ENCODE measurements at regions of chr6 and their contacts with region 1.

Region 1: DNA sequence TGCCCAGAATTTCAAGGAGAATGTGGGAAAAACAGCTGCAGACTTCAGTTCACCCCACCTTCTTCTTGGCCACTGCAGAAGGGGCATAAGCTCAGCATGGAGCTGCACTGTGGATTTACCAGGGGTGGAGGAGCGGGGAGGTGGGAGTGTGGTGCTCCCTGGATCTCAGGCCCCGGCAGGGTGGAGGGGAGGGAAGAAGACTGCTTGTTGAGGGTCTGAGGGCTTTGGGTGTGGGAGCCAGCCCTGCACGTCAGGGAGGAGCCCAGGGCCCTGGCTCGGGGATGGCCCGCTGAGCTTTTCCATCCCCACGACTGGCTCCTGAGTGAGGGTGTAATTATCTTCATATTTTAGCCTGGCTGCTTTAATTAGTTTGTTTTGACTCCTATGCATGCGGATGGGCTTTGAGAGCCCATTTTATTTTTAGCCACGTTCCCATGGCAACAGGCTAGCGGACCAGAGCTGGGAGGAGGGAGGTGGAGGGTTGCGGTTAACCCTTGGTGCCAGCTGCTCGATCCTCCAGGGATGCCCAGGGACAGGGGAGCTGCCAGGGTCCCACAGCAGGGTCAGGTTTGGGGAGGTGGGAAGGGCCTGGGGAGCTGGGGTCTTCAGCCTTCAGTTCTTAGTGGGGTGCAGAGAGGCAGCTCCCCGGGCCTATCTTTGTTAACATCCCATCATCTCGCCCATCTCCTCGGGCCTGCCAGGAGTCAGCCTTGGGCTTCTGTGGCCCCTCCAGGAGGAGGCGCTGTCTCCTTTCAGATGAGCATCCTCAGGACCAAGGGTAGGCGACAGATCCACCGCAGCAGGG is 68.2 kb downstream of the RAB44 start:
- DNase-seq: peak; percentile 87
- H3K4me3 ChIP-seq: no peak overlapping the region
- H3K27ac ChIP-seq: no peak overlapping the region
- H3K4me1 ChIP-seq: peaks cover 12% of the 10 kb centered on the region
- H3K27me3 ChIP-seq: no peaks in the 10 kb centered on the region
- CTCF ChIP-seq: peak; percentile 75 to 92 (median 80)
- POLR2A ChIP-seq: no peak

Region 2: DNA sequence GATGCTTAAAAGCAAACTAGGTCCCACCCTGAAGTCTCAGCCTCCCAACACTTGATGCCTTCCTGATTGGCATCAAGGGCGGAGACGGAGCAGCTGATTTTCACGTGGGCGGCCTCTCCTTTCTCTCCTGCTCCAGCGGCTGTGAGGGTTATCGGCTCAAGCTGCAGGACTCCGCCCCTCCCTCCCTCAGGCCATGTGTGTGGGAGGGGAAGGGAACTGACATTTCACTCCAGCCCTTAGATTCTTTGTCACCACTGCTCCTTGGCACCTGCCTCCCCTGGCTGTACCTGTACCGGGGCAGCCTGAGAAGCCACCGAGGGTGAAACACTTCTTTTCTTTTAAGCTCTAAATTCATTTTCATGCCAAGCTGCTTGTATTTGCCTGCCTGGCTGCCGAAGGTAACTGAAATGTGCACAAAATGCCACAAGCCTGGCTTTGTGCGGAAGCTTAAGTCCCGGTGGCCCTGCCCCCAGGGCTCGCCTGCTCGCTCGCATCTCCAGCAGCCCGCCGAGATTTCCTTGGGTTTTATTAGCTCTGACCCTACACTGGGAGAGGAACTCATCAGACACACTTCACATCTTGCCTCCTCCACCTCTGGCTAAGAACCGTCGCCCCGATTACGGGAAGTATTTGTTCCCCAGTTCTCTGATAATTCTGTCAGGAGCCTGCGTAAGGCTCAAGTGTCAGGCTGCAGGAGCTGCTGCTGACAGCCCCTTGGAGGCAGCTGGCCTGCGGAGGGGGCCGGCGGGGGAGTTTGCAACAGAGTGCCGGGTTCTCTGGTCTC is 83.1 kb after region 1 on chr6:
- intact Hi-C with region 1: loop called (anchors 5 kb)
- DNase-seq: peak; percentile 94
- H3K4me3 ChIP-seq: no peak overlapping the region
- H3K27ac ChIP-seq: peak overlapping the region; percentile 9 to 68
- H3K4me1 ChIP-seq: peaks cover 53% of the 10 kb centered on the region
- H3K27me3 ChIP-seq: no peaks in the 10 kb centered on the region
- CTCF ChIP-seq: no peak
- POLR2A ChIP-seq: no peak

Region 3: GRCh38 chr6:36979347-36979742 is 213.5 kb after region 1 on chr6:
- intact Hi-C with region 1: loop called (anchors 5 kb)
- DNase-seq: peak; percentile 83
- H3K4me3 ChIP-seq: no peak overlapping the region
- H3K27ac ChIP-seq: peak overlapping the region; percentile 36 to 68
- H3K4me1 ChIP-seq: peaks cover 41% of the 10 kb centered on the region
- H3K27me3 ChIP-seq: no peaks in the 10 kb centered on the region
- CTCF ChIP-seq: peak; percentile 49 to 69 (median 59)
- POLR2A ChIP-seq: no peak